ENCODE measurements at regions of chr7 and their contacts with region 1.

Region 1: GRCh38 chr7:99267481-99267840 is 5.2 kb upstream of the MYH16 start:
- DNase-seq: peak; percentile 91
- ATAC-seq: peak; percentile 97
- H3K4me3 ChIP-seq: no peak overlapping the region
- H3K27ac ChIP-seq: peak overlapping the region; percentile 82
- H3K4me1 ChIP-seq: peaks cover 25% of the 10 kb centered on the region
- H3K27me3 ChIP-seq: no peaks in the 10 kb centered on the region
- CTCF ChIP-seq: no peak

Region 2: DNA sequence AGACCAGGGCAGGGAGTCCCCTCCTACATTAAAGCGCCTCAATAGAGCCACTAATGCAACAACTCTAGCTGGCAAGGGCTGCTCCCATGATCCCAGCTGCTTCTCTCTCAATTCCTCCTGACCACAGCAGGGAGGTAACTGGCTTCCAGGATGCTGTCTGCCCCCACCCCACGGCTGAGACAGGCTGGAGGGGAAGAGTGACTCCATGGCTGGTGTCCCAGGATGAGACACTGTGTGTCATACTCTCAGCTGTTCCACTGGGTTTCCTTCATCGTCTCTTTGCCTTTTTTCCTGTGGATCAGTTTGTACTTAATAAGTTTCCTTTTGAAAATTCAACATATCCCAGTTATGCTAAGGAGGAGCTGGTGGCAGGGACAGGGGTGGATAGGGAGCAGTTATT is 22.5 kb before region 1 on chr7:
- CTCF ChIA-PET with region 1: no interaction called
- POLR2A ChIA-PET with region 1: no interaction called
- in situ Hi-C with region 1: no loop called
- intact Hi-C with region 1: no loop called
- DNase-seq: no peak
- ATAC-seq: peak; percentile 56; the same call in 1 of the 2 replicates
- H3K4me3 ChIP-seq: no peak overlapping the region
- H3K27ac ChIP-seq: no peak overlapping the region
- H3K4me1 ChIP-seq: no peaks in the 10 kb centered on the region
- H3K27me3 ChIP-seq: no peaks in the 10 kb centered on the region
- CTCF ChIP-seq: no peak

Region 3: GRCh38 chr7:99278177-99278576 is 10.7 kb after region 1 on chr7:
- CTCF ChIA-PET with region 1: interaction called, 10 read pairs
- POLR2A ChIA-PET with region 1: no interaction called
- in situ Hi-C with region 1: no loop called
- intact Hi-C with region 1: no loop called
- DNase-seq: no peak
- ATAC-seq: no peak
- H3K4me3 ChIP-seq: no peak overlapping the region
- H3K27ac ChIP-seq: no peak overlapping the region
- H3K4me1 ChIP-seq: no peaks in the 10 kb centered on the region
- H3K27me3 ChIP-seq: no peaks in the 10 kb centered on the region
- CTCF ChIP-seq: no peak

Region 4: DNA sequence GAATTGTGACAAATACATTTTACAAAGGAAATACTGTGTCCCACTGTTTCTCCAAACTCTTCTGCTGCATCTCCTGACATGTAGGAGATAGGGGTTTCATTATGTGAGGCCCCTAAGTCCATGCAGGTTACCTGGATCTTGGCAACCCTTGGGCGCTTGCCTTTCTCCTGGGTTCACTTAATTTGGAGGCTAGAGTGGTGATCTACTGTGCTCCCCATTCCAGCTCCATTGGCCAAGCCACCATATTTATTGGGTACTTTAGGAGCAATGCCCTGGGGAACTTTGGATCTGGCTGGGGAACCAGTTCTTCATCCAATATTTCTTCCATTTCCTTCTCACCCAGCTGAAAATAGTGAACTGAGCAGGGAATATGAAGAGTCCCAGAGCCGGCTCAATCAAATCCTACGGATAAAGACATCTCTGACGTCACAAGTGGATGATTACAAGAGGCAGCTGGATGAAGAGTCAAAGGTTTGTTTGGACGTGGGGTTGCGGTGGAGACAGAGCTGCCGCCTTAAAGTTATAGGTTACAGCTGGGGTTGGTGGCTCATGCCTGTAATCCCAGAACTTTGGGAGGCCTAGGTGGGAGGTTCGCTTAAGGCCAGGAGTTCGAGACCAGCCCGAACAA is 23.6 kb after region 1 on chr7:
- CTCF ChIA-PET with region 1: no interaction called
- POLR2A ChIA-PET with region 1: interaction called, 14 read pairs
- in situ Hi-C with region 1: no loop called
- intact Hi-C with region 1: no loop called
- DNase-seq: no peak
- ATAC-seq: no peak
- H3K4me3 ChIP-seq: no peak overlapping the region
- H3K27ac ChIP-seq: no peak overlapping the region
- H3K4me1 ChIP-seq: no peaks in the 10 kb centered on the region
- H3K27me3 ChIP-seq: no peaks in the 10 kb centered on the region
- CTCF ChIP-seq: no peak

Region 5: GRCh38 chr7:99331002-99331401 is 63.5 kb after region 1 on chr7:
- CTCF ChIA-PET with region 1: no interaction called
- POLR2A ChIA-PET with region 1: no interaction called
- in situ Hi-C with region 1: no loop called
- intact Hi-C with region 1: no loop called
- DNase-seq: no peak
- ATAC-seq: no peak
- H3K4me3 ChIP-seq: no peak overlapping the region
- H3K27ac ChIP-seq: no peak overlapping the region
- H3K4me1 ChIP-seq: peaks cover 17% of the 10 kb centered on the region
- H3K27me3 ChIP-seq: no peaks in the 10 kb centered on the region
- CTCF ChIP-seq: no peak